ENCODE measurements at regions of chr11 and their contacts with region 1.

Region 1: DNA sequence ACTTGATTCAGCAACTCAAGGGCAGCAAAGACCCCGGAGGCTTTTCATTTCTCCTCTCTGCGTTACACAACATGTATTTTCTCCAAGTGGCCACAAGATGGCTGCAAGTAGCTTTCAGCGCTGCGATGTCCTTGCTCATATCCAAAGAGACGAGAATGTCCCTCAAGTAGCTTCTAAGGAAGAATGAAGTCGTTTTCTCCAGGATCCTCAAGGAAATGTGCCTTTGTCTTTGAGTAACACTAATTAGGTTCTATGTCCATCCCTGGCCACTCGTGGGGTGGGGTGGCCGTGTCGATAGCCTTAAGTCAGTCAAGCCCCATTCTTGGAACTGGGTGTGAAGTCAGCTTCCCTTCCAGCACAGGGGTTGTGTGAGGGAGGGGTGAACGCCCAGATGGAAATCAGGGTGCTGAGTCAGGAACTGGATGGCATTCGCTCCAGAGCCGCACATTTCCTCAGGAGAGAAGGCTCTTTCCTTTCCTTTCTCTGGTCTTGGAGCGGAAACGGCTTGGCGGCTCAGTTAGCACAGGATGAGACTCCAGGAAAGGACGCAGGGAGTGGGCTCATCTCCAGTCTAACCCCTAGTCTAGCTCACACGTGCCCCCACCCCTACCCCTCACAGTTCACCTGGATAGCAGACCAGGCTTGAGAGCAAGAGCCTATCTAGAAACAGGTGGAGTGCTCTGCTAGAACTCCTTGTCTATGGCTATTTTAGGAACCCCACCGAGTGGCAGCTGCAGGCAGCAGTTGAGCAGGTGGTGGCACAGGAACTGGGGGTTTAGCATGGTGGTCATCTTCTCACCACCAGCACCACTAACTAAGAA is 44.3 kb downstream of the NNMT start:
- DNase-seq: peak; percentile 91
- H3K4me3 ChIP-seq: peak overlapping the region; percentile 5 to 31 (median 19)
- H3K27ac ChIP-seq: peak overlapping the region in 1 of 4 donors; percentile 2
- H3K4me1 ChIP-seq: peaks cover 0 to 11% (median 11%) of the 10 kb centered on the region in 4 donors
- H3K27me3 ChIP-seq: peaks cover 0 to 8% (median 0%) of the 10 kb centered on the region in 4 donors
- CTCF ChIP-seq: peak; percentile 68 to 79 (median 75)
- EP300 ChIP-seq: no peak
- POLR2A ChIP-seq: no peak

Region 2: DNA sequence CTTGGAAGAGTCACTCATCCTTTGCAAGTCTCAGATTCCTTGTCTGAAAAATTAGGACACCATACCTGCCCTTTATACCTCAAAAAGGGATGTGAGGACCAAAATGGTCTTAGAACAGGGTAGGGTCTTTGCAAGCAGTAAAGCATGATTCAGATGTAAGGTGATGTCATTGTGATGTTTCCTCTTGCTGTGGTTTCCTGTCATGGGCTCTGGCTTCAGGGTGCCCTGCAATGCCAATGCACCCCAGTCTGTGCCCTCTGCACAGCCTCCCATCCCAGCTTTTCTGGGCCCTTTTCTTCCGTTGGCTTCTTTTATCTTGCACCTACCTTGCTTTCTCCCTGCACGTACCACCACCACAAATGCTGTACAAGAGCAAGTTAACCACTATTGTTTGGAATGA is 132.1 kb before region 1 on chr11:
- intact Hi-C with region 1: no loop called
- DNase-seq: no peak
- H3K4me3 ChIP-seq: no peak overlapping the region
- H3K27ac ChIP-seq: no peak overlapping the region
- H3K4me1 ChIP-seq: peaks cover 40 to 92% (median 77%) of the 10 kb centered on the region in 4 donors
- H3K27me3 ChIP-seq: no peaks in the 10 kb centered on the region
- CTCF ChIP-seq: no peak
- EP300 ChIP-seq: no peak
- POLR2A ChIP-seq: no peak

Region 3: DNA sequence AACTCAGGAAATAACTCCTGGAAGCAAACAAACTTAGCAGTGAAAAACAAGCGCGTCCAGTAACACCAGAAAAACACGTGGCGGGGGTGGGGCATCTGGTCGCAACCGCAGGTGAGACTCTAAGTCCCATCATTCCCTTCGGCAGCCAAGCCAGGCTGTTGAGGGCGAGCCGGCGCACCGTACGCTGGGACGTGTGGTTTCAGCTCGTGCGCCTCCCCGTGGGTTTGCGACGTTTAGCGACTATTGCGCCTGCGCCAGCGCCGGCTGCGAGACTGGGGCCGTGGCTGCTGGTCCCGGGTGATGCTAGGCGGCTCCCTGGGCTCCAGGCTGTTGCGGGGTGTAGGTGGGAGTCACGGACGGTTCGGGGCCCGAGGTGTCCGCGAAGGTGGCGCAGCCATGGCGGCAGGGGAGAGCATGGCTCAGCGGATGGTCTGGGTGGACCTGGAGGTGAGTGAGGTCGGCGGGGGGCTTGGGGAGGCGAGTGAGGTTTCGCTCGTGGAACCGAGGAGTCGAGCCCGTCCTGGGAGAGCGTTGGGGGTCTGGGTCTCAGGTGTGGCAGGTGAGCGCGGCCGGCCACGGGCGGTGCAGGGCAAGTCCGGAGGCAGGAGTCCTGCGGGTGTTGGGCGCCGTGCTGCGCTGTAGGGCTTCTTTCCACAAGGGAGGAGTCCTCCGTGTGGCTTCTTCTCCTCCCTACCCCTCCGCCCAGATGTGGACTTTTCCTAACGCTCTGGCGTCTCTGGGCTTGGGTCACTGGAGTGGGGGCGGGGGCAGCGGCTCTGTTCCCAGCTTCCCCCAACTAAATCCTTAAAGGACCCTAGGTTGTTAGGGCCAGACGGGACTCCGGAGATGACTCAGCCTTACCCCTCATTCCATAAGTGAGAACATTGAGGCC is 99.0 kb after region 1 on chr11 and contains the start of gene REXO2:
- intact Hi-C with region 1: loop called (anchors 10 kb)
- DNase-seq: peak; percentile 98
- H3K4me3 ChIP-seq: peak within 1 kb of the TSS; percentile 79 to 96 (median 92)
- H3K27ac ChIP-seq: peak within 1 kb of the TSS; percentile 86 to 89 (median 88)
- H3K4me1 ChIP-seq: peaks cover 11 to 35% (median 30%) of the 10 kb centered on the region in 4 donors
- H3K27me3 ChIP-seq: no peaks in the 10 kb centered on the region
- CTCF ChIP-seq: peak in 2 of 3 experiments; percentile 34 to 37
- EP300 ChIP-seq: no peak
- POLR2A ChIP-seq: peak; percentile 50
- total RNA-seq, gene REXO2: 95.1 to 152 (median 142) TPM

Region 4: DNA sequence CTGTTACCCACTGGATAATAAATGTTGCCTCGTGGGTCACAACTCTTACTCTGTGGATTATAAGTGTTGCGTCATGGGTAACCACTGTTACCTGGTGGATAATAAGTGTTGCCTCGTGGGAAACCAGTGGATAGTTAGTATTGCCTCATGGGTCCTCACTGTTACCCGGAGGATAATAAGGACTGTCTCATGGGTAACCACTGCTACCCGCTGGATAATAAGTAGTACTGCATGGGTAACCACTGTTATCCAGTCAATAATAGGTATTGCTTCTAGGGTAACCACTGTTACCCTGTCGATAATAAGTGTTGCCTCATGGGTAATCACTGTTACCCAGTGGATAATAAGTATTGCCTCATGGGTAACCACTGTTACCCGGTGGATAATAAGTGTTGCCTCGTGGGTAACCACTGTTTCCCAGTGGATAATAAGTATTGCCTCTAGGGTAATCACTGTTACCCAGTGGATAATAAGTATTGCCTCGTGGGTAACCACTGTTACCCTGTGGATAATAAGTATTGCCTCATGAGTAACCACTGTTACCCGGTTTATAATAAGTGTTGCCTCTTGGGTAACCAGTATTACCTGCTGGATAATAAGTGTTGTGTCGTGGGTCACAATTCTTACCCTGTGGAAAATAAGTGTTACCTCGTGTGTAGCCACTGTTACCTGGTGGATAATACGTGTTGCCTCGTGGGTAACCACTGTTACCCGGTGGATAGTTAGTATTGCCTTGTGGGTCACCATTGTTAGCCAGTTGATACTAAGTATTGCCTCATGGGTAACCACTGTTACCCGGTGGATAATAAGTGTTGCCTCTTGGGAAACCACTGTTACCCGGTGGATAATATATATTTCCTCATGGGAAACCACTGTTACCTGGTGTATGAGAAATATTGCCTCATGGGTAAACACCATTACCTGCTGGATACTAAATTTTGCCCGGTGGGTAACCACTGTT is 270.7 kb after region 1 on chr11:
- intact Hi-C with region 1: loop called (anchors 10 kb)
- DNase-seq: peak; percentile 39
- H3K4me3 ChIP-seq: no peak overlapping the region
- H3K27ac ChIP-seq: no peak overlapping the region
- H3K4me1 ChIP-seq: no peaks in the 10 kb centered on the region
- H3K27me3 ChIP-seq: no peaks in the 10 kb centered on the region
- CTCF ChIP-seq: no peak
- EP300 ChIP-seq: no peak
- POLR2A ChIP-seq: no peak

Region 5: GRCh38 chr11:114762408-114762807 is 421.9 kb after region 1 on chr11:
- intact Hi-C with region 1: loop called (anchors 5 kb)
- DNase-seq: no peak
- H3K4me3 ChIP-seq: no peak overlapping the region
- H3K27ac ChIP-seq: no peak overlapping the region
- H3K4me1 ChIP-seq: no peaks in the 10 kb centered on the region
- H3K27me3 ChIP-seq: no peaks in the 10 kb centered on the region
- CTCF ChIP-seq: peak; percentile 57 to 72 (median 61)
- EP300 ChIP-seq: no peak
- POLR2A ChIP-seq: no peak